Dorsolateral prefrontal cortex (tissue), 120 donors: ENCODE measurements at regions of chr1 and their contacts with region 1.

Region 1: GRCh38 chr1:21963477-21964217 is 13.2 kb upstream of the CELA3B start:
- DNase-seq: peak; percentile 39 to 87 (median 74)
- H3K4me3 ChIP-seq: no peak overlapping the region
- H3K27ac ChIP-seq: no peak overlapping the region
- H3K27me3 ChIP-seq: no peaks in the 10 kb centered on the region
- CTCF ChIP-seq: peak; percentile 74 to 98 (median 93)

Region 2: GRCh38 chr1:21508580-21509350 is 454.9 kb before region 1 on chr1:
- intact Hi-C with region 1: loop called in 1 of 2 experiments (anchors 10 kb)
- DNase-seq: peak in 5 of 10 donors; percentile 22 to 69 (median 34)
- H3K4me3 ChIP-seq: peak overlapping the region in 48 of 59 donors; percentile 18 to 62 (median 45)
- H3K27ac ChIP-seq: peak overlapping the region in 5 of 59 donors; percentile 6 to 32 (median 23)
- H3K27me3 ChIP-seq: peaks cover 0 to 20% (median 7%) of the 10 kb centered on the region in 45 donors
- CTCF ChIP-seq: peak in 55 of 56 donors; percentile 24 to 77 (median 58)

Region 3: GRCh38 chr1:21703318-21703963 is 260.2 kb before region 1 on chr1:
- intact Hi-C with region 1: loop called in 1 of 2 experiments (anchors 10 kb)
- DNase-seq: peak in 1 of 10 donors; percentile 62
- H3K4me3 ChIP-seq: peak overlapping the region in 8 of 59 donors; percentile 8 to 55 (median 18)
- H3K27ac ChIP-seq: peak overlapping the region in 55 of 59 donors; percentile 19 to 96 (median 87)
- H3K27me3 ChIP-seq: no peaks in the 10 kb centered on the region
- CTCF ChIP-seq: peak in 55 of 56 donors; percentile 27 to 67 (median 46)

Region 4: GRCh38 chr1:22039594-22040285 is 76.1 kb after region 1 on chr1:
- intact Hi-C with region 1: no loop called
- DNase-seq: no peak
- H3K4me3 ChIP-seq: peak overlapping the region in 1 of 59 donors; percentile 22
- H3K27ac ChIP-seq: no peak overlapping the region
- H3K27me3 ChIP-seq: no peaks in the 10 kb centered on the region
- CTCF ChIP-seq: no peak

Region 5: DNA sequence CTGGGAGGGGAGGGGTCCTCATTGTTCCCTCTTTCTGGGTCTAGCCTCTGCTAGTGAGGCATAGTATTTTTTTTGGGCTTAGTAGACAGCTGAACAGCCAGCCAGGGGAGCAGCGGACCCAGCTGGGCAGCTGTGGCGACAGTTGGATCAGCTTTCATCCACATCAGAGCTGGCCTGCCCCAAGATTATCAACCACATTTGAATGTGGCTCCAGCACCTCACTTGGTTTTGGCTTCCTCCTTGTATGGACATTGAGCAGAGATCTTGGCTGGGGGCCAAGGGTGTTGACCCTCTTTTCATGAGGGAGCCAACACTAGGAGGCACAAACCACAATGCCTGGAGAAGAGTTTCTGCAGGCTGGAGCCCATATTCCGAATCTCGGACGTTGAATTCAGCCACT is 154.2 kb after region 1 on chr1:
- intact Hi-C with region 1: no loop called
- DNase-seq: peak in 1 of 10 donors; percentile 31
- H3K4me3 ChIP-seq: no peak overlapping the region
- H3K27ac ChIP-seq: peak overlapping the region in 49 of 59 donors; percentile 9 to 90 (median 77)
- H3K27me3 ChIP-seq: no peaks in the 10 kb centered on the region
- CTCF ChIP-seq: no peak